CD4-positive, alpha-beta memory T cell (primary cell): ENCODE measurements at regions of chr3 and their contacts with region 1.

Region 1: DNA sequence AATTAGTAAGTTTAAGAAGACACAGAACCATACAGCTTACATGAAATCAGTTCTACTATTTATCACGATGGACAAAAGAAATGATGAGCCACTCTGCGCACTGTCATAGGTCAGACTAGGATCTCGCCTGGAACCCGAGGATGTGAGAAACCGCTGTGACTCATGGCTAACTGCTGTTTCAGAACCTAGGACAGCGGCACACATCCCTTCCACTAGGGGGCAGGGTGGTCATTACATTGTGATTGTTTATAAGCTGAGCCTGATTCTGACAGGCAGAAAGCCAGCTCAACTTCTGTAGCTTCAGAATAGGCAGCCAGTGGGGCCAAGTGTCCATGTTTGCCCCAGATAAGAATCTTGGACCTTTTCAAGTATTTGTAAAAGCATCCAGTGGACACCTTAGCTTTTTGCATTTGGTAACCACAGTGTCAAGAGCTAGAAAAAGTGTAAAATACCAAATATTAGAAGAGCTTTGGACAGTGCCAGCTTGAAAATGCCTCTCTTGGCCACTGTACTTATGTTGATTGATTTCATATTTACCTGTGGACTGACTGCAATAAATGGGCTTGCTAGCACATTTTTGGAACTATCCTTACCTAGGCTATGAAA is 115.8 kb downstream of the KBTBD8 start:
- DNase-seq: peak; percentile 63 to 76 (median 68)
- H3K4me3 ChIP-seq: no peak overlapping the region
- H3K4me3 Mint-ChIP-seq: no peak overlapping the region
- H3K27ac ChIP-seq: no peak overlapping the region
- H3K27ac Mint-ChIP-seq: no peak overlapping the region
- H3K4me1 ChIP-seq: no peaks in the 10 kb centered on the region
- H3K4me1 Mint-ChIP-seq: no peaks in the 10 kb centered on the region
- H3K27me3 ChIP-seq: no peaks in the 10 kb centered on the region
- H3K27me3 Mint-ChIP-seq: peaks cover 7 to 17% of the 10 kb centered on the region in 2 donors

Region 2: DNA sequence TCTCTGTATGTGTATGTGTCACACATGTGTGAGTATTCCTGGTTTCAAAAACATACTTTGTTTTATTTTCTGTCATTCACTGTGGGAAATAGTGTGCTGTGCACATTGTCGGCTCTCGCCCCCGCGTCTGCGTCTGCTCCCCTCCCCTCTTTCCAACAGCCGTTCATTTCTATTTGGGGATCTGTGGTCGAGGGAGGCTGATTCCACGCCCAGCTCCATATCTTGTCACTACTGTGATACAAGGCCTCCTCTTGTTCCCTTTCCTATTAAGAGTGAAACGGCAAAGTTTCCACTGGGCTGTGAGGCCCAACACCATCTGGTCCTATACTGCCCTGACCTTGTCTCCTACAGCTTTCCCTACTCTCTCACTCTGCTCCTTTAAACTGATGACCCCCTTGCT is 440.6 kb before region 1 on chr3:
- CTCF ChIA-PET with region 1: no interaction called
- POLR2A ChIA-PET with region 1: no interaction called
- intact Hi-C with region 1: no loop called
- DNase-seq: no peak
- H3K4me3 ChIP-seq: no peak overlapping the region
- H3K4me3 Mint-ChIP-seq: no peak overlapping the region
- H3K27ac ChIP-seq: no peak overlapping the region
- H3K27ac Mint-ChIP-seq: no peak overlapping the region
- H3K4me1 ChIP-seq: no peaks in the 10 kb centered on the region
- H3K4me1 Mint-ChIP-seq: peaks cover 4 to 20% (median 5%) of the 10 kb centered on the region in 4 donors
- H3K27me3 ChIP-seq: no peaks in the 10 kb centered on the region
- H3K27me3 Mint-ChIP-seq: no peaks in the 10 kb centered on the region

Region 3: GRCh38 chr3:66938338-66938963 is 175.5 kb before region 1 on chr3:
- CTCF ChIA-PET with region 1: interaction called, 4 read pairs
- POLR2A ChIA-PET with region 1: no interaction called
- intact Hi-C with region 1: loop called (anchors 2 kb)
- DNase-seq: peak; percentile 33 to 42 (median 34)
- H3K4me3 ChIP-seq: no peak overlapping the region
- H3K4me3 Mint-ChIP-seq: no peak overlapping the region
- H3K27ac ChIP-seq: no peak overlapping the region
- H3K27ac Mint-ChIP-seq: no peak overlapping the region
- H3K4me1 ChIP-seq: no peaks in the 10 kb centered on the region
- H3K4me1 Mint-ChIP-seq: no peaks in the 10 kb centered on the region
- H3K27me3 ChIP-seq: no peaks in the 10 kb centered on the region
- H3K27me3 Mint-ChIP-seq: peaks cover 6 to 9% of the 10 kb centered on the region in 2 donors

Region 4: DNA sequence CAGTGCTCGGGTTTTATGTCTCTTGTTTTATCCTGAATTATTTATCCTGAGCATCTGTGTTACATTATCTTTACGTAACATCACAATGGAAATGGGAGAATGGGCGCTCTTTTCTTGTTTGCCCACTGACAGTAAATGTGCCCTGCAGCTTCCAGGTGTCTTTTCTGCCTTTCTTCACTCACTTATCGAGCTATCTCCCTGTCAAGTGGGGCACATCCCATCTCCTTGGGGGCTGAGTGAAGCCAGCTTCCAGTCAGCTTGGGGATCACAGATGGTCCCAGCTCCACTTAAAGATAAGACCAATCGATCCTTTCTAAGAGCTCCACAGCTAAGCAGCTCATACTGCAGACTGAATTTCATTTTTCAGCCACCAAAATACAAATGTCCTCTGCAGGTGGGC is 10.0 kb after region 1 on chr3:
- CTCF ChIA-PET with region 1: interaction called, 17 read pairs
- POLR2A ChIA-PET with region 1: no interaction called
- intact Hi-C with region 1: no loop called
- DNase-seq: no peak
- H3K4me3 ChIP-seq: no peak overlapping the region
- H3K4me3 Mint-ChIP-seq: no peak overlapping the region
- H3K27ac ChIP-seq: no peak overlapping the region
- H3K27ac Mint-ChIP-seq: no peak overlapping the region
- H3K4me1 ChIP-seq: no peaks in the 10 kb centered on the region
- H3K4me1 Mint-ChIP-seq: no peaks in the 10 kb centered on the region
- H3K27me3 ChIP-seq: no peaks in the 10 kb centered on the region
- H3K27me3 Mint-ChIP-seq: peaks cover 3 to 8% of the 10 kb centered on the region in 2 donors

Region 5: DNA sequence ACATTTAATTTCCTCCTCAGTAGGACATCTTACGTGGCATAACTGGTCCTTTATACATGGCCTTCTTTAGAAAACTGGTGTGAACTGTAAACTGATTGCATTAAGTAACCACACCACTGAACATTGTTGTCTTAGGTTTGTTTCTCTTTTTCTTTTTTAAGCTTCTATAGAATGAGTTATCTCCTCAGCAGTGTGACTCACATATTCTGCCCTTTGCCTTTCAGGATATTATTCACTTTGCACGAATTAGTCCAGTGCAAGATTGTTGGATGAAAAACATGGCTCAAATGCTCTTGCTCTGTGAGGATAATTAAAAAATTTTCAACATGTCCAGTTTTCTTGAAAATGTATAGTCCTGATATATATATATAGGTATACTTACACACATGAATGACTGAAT is 31.8 kb after region 1 on chr3:
- CTCF ChIA-PET with region 1: no interaction called
- POLR2A ChIA-PET with region 1: no interaction called
- intact Hi-C with region 1: no loop called
- DNase-seq: no peak
- H3K4me3 ChIP-seq: no peak overlapping the region
- H3K4me3 Mint-ChIP-seq: no peak overlapping the region
- H3K27ac ChIP-seq: no peak overlapping the region
- H3K27ac Mint-ChIP-seq: no peak overlapping the region
- H3K4me1 ChIP-seq: no peaks in the 10 kb centered on the region
- H3K4me1 Mint-ChIP-seq: no peaks in the 10 kb centered on the region
- H3K27me3 ChIP-seq: peaks cover 5% of the 10 kb centered on the region
- H3K27me3 Mint-ChIP-seq: peaks cover 0 to 7% of the 10 kb centered on the region in 2 donors

Region 6: GRCh38 chr3:68256635-68257223 is 1142.8 kb after region 1 on chr3:
- CTCF ChIA-PET with region 1: no interaction called
- POLR2A ChIA-PET with region 1: no interaction called
- intact Hi-C with region 1: loop called (anchors 5 kb)
- DNase-seq: peak; percentile 3 to 23 (median 13)
- H3K4me3 ChIP-seq: no peak overlapping the region
- H3K4me3 Mint-ChIP-seq: no peak overlapping the region
- H3K27ac ChIP-seq: no peak overlapping the region
- H3K27ac Mint-ChIP-seq: no peak overlapping the region
- H3K4me1 ChIP-seq: no peaks in the 10 kb centered on the region
- H3K4me1 Mint-ChIP-seq: peaks cover 0 to 5% (median 0%) of the 10 kb centered on the region in 4 donors
- H3K27me3 ChIP-seq: no peaks in the 10 kb centered on the region
- H3K27me3 Mint-ChIP-seq: no peaks in the 10 kb centered on the region

Region 7: GRCh38 chr3:68893600-68894239 is 1779.8 kb after region 1 on chr3:
- CTCF ChIA-PET with region 1: interaction called, 36 read pairs
- POLR2A ChIA-PET with region 1: interaction called, 3 read pairs
- intact Hi-C with region 1: loop called (anchors 1 kb)
- DNase-seq: peak in 4 of 5 donors; percentile 29 to 36 (median 32)
- H3K4me3 ChIP-seq: no peak overlapping the region
- H3K4me3 Mint-ChIP-seq: no peak overlapping the region
- H3K27ac ChIP-seq: no peak overlapping the region
- H3K27ac Mint-ChIP-seq: no peak overlapping the region
- H3K4me1 ChIP-seq: no peaks in the 10 kb centered on the region
- H3K4me1 Mint-ChIP-seq: no peaks in the 10 kb centered on the region
- H3K27me3 ChIP-seq: no peaks in the 10 kb centered on the region
- H3K27me3 Mint-ChIP-seq: peaks cover 7 to 14% of the 10 kb centered on the region in 2 donors